GM10248 (cell line): ENCODE measurements at regions of chr1 and their contacts with region 1.

Region 1: GRCh38 chr1:36475910-36476604 is 6.7 kb downstream of the CSF3R start:
- DNase-seq: no peak
- CTCF ChIP-seq: no peak

Region 2: DNA sequence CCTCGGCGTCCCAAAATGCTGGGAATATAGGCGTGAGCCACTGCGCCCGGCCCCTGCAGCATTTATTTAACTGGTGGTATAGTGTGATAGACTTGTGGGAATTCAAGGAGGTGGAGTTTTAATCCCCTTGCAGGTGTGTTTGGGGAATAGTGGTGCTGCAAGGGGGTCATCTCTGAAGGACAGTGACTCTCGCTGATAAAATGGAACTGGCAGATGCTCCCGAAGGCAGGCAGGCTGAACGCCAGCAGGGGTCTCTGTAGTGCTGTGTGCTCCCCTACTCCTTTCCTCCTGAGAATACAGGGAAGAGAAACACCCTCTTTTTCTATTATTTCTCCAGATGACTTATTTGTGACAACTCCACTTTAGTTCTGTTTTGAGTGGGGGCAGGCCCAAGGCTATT is 29.8 kb before region 1 on chr1:
- CTCF ChIA-PET with region 1: interaction called, 10 read pairs
- POLR2A ChIA-PET with region 1: no interaction called
- DNase-seq: peak; percentile 30
- CTCF ChIP-seq: peak; percentile 62